ENCODE measurements at regions of chr6 and their contacts with region 1.

Region 1: DNA sequence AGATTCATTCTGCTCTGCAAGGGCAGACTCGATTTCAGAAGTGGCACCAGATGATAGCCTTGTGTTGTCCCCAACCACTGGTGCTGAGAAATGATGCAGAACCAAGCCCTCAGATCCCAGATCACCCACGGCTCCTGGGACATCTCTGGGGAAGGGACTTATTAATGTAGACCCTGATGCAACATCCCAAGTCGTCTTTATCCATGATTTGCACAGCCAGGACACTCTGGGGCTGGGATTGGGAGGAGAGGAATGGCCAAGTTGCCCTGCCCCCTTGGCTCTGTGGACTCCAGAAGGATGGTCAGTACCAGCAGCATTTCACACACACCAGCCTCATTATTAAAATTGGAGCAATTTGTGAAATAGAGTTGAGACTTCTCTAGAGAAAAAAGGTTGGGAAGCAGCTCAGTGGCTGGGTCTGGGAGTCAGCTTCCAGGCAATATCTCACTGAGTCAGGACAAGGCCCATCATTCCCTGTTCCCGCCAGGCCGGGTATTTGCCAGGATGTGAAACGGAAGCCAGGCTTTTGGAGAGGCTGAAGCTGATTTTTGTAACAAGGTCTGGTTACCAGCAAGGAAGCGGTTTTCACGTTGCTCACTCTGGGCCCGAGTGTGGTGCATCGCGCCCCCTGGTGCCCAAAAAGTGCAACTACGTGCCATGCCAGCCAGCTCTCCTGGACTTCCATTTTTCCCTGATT is 67.4 kb downstream of the ZBTB2 start:
- DNase-seq: peak; percentile 76
- H3K4me3 Mint-ChIP-seq: no peak overlapping the region
- H3K27ac Mint-ChIP-seq: no peak overlapping the region
- H3K4me1 Mint-ChIP-seq: peaks cover 23% of the 10 kb centered on the region
- H3K27me3 Mint-ChIP-seq: peaks cover 57% of the 10 kb centered on the region

Region 2: DNA sequence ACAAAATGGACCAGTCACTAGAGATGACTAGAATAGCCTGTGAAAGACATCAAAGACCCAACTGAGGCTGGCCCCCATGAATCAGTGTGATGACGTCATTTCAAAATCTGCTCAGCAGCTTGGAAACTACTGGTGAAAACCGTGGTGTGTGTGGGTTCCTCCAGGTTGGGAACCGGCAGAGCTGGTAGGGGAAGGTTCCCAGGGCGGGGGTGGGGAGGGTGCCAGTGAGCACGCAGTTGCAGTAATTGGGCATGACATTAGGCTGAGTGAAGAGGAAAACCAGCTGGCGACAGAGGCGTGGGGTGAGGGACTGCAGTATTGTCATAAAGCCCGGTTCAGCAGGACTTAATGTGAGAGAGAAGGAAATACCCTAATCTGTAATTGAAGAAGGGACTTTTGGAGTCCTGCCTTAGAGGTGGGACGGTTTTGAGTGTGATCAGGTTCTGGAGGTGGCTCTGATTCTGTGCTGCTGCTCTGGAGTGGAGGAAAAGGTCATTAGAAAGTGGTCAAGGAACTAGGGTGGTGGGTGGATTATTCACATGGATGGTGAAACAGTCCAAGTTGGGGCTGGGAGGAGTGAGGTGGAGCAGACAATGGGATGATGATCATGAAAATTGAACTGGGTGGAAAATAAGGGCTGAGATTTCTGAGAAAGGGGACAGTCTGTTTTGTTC is 510.5 kb before region 1 on chr6:
- CTCF ChIA-PET with region 1: interaction called, 20 read pairs
- POLR2A ChIA-PET with region 1: no interaction called
- DNase-seq: peak; percentile 21
- H3K4me3 Mint-ChIP-seq: no peak overlapping the region
- H3K27ac Mint-ChIP-seq: peak overlapping the region; percentile 70
- H3K4me1 Mint-ChIP-seq: peaks cover 23% of the 10 kb centered on the region
- H3K27me3 Mint-ChIP-seq: peaks cover 6% of the 10 kb centered on the region

Region 3: DNA sequence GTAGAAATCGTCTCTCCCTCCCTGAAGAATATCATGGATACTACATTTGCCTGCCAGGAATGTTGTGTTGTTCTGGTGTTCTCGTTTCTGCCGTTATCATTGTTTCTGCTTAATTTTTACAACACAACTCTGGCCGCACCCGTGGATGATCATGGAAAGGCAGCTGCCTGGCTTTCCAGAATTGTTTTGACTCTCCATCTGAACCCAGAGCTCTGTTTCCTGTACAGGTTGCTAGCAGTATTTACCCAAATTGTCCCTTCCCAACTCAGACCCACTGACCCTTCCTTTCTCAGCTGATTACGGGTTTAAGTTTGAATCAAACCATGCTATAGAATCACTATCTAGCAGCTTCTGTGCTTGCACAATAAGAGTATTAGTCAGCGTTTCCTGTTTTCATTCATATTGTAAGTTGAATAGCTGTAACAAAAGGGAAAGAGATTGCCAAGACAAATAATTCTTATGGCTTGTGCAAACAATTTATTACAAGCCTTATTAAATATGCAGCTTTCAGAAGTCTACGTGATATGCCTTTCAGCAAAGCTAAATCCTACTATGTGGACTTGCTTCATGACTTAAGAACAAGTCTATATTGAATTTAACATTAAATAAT is 319.4 kb before region 1 on chr6:
- CTCF ChIA-PET with region 1: interaction called, 28 read pairs
- POLR2A ChIA-PET with region 1: interaction called, 3 read pairs
- DNase-seq: no peak
- H3K4me3 Mint-ChIP-seq: no peak overlapping the region
- H3K27ac Mint-ChIP-seq: peak overlapping the region; percentile 64
- H3K4me1 Mint-ChIP-seq: peaks cover 18% of the 10 kb centered on the region
- H3K27me3 Mint-ChIP-seq: no peaks in the 10 kb centered on the region

Region 4: DNA sequence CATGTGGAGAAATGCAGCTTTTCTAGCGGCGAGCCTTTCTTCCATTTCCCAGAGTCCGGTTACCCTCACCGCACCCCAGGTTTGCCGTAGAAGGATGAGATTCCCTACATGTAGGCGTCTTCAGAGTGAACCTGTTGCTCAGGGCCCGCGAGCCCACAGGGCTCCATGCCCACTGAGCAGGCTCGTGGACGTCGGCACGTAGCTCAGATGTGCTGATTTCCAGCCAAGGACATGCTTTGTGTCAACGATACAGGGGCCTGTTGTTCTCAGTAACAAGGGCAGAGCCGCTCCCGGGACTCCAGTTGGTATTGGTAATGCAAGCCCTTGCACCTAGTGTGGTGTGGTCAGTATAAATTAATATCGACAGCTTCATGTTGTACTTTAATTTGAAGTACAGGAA is 298.9 kb before region 1 on chr6:
- CTCF ChIA-PET with region 1: interaction called, 19 read pairs
- POLR2A ChIA-PET with region 1: no interaction called
- DNase-seq: no peak
- H3K4me3 Mint-ChIP-seq: no peak overlapping the region
- H3K27ac Mint-ChIP-seq: no peak overlapping the region
- H3K4me1 Mint-ChIP-seq: peaks cover 7% of the 10 kb centered on the region
- H3K27me3 Mint-ChIP-seq: no peaks in the 10 kb centered on the region

Region 5: DNA sequence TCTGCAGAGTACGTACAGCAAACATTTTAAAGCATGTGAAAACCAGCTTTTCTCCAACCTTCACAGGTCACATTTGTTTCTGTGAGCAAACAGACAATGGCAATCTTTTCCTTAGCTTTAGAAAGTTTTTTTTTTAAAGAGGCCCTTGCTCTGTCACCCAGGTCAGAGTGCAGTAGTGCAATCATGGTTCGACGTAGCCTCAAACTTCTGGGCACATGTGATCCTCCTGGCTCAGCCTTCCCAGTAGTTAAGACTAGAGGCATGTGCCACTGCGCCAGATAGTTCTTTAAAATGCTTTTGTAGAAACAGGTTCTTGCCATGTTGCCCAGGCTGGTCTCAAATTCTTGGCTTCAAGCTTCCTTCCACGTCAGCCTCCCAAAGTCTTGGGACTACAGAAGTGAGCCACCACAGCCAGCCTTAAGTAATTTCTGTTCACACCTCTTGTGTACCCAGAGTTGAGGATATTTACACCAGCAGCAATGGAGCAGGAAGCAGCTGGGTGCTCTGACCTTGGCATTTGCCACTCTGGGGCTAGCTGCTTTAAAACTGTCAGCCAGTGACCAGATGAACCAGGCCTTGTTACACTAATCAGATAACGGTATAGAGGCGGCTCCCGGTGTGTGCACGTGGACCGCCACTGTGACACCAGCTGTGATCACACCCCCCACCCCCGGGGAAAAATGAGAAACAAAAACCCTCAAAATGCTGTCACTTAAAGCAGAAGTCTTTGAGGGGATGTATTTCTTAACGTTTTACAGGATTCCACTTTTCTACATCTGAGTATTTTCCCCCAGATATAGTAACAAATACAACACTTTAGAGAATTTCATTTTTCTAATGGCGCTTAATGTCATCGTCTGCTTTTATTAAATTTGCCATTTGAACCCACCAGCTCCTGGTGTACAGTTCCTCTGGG is 12.8 kb before region 1 on chr6:
- CTCF ChIA-PET with region 1: interaction called, 12 read pairs
- POLR2A ChIA-PET with region 1: no interaction called
- DNase-seq: no peak
- H3K4me3 Mint-ChIP-seq: no peak overlapping the region
- H3K27ac Mint-ChIP-seq: no peak overlapping the region
- H3K4me1 Mint-ChIP-seq: no peaks in the 10 kb centered on the region
- H3K27me3 Mint-ChIP-seq: peaks cover 23% of the 10 kb centered on the region

Region 6: GRCh38 chr6:151357758-151358436 is 34.0 kb after region 1 on chr6:
- CTCF ChIA-PET with region 1: interaction called, 11 read pairs
- POLR2A ChIA-PET with region 1: interaction called, 3 read pairs
- DNase-seq: no peak
- H3K4me3 Mint-ChIP-seq: no peak overlapping the region
- H3K27ac Mint-ChIP-seq: no peak overlapping the region
- H3K4me1 Mint-ChIP-seq: peaks cover 15% of the 10 kb centered on the region
- H3K27me3 Mint-ChIP-seq: no peaks in the 10 kb centered on the region

Region 7: DNA sequence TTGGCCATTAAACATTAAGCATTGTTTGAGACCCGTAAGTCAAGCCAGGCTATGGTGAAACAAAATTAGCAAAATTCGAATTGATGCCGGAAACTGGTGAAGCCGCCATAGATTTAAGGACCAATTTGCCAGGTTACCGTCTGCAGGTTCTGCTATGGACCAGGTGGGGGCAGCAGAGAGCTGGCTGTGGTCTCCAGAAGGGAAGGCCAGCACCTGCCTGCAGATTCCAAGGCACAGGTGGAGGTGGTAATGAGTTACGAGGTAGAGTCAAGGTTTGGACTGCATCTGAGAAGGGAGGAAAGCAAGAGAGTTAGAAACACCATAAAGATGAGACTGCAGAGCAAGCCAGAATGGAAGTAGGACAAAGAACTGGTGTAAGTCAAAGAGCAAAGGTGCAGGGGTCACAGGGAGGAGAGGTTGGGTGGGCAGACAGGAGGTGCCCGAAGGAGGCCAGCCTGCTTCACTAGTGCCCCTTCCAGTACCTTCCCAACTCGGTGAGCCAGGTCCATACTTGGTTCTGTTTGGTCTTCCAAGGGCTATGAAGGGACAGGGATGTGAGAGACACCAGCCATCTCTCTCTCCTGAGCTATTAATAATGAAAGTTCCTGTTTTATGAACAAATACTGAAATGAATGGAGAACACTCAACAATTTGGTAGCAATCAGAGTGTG is 351.9 kb after region 1 on chr6:
- CTCF ChIA-PET with region 1: no interaction called
- POLR2A ChIA-PET with region 1: no interaction called
- DNase-seq: peak; percentile 63
- H3K4me3 Mint-ChIP-seq: no peak overlapping the region
- H3K27ac Mint-ChIP-seq: no peak overlapping the region
- H3K4me1 Mint-ChIP-seq: peaks cover 12% of the 10 kb centered on the region
- H3K27me3 Mint-ChIP-seq: no peaks in the 10 kb centered on the region